ENCODE measurements at regions of chr7 and their contacts with region 1.

Region 1: GRCh38 chr7:29748286-29749108 is 57.8 kb upstream of the WIPF3 start:
- DNase-seq: peak; percentile 66
- H3K4me3 Mint-ChIP-seq: no peak overlapping the region
- H3K27ac Mint-ChIP-seq: no peak overlapping the region
- H3K4me1 Mint-ChIP-seq: no peaks in the 10 kb centered on the region
- H3K27me3 Mint-ChIP-seq: peaks cover 12% of the 10 kb centered on the region
- CTCF ChIP-seq: peak; percentile 49

Region 2: GRCh38 chr7:29622335-29623265 is 125.9 kb before region 1 on chr7:
- CTCF ChIA-PET with region 1: no interaction called
- POLR2A ChIA-PET with region 1: no interaction called
- intact Hi-C with region 1: no loop called
- DNase-seq: peak; percentile 95
- H3K4me3 Mint-ChIP-seq: peak overlapping the region; percentile 66
- H3K27ac Mint-ChIP-seq: peak overlapping the region; percentile 88
- H3K4me1 Mint-ChIP-seq: peaks cover 31% of the 10 kb centered on the region
- H3K27me3 Mint-ChIP-seq: no peaks in the 10 kb centered on the region
- CTCF ChIP-seq: no peak

Region 3: DNA sequence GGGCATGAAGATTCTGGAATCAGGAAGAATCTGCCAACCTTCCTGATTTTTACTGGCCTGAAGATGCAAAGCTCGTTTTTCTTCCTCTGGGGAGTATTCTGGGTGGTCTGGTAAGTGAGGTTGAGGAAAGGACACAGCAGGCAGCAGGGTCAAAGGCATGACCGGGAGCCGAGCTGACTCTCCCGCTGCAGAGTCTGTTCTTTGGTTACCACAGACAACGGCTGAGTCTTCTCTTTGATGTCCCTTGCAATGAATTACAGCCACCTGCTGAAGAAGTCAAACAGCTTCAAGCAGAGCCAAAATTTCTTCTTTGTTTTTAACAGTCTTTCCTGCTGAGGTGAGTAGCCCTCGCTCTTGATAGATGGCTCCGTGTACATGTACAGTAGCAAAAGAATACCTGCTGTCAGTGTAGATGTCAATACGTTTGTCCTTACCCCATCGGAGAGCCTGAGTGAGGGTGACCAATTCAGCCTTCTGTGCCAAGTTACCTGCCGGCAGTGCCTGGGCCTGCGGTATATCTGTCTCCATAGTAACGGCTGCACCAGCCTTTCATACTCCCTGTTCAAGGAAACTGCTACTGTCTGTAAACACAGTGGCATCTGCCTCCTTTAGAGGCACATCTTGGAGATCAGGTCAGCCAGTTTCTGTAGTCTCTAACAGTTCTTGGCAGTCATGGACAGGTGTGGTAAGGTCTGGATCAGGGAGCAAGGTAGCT is 108.5 kb before region 1 on chr7:
- CTCF ChIA-PET with region 1: interaction called, 5 read pairs
- POLR2A ChIA-PET with region 1: no interaction called
- intact Hi-C with region 1: loop called (anchors 5 kb)
- DNase-seq: no peak
- H3K4me3 Mint-ChIP-seq: no peak overlapping the region
- H3K27ac Mint-ChIP-seq: no peak overlapping the region
- H3K4me1 Mint-ChIP-seq: peaks cover 5% of the 10 kb centered on the region
- H3K27me3 Mint-ChIP-seq: no peaks in the 10 kb centered on the region
- CTCF ChIP-seq: no peak